ENCODE measurements at regions of chr1 and their contacts with region 1.

Region 1: DNA sequence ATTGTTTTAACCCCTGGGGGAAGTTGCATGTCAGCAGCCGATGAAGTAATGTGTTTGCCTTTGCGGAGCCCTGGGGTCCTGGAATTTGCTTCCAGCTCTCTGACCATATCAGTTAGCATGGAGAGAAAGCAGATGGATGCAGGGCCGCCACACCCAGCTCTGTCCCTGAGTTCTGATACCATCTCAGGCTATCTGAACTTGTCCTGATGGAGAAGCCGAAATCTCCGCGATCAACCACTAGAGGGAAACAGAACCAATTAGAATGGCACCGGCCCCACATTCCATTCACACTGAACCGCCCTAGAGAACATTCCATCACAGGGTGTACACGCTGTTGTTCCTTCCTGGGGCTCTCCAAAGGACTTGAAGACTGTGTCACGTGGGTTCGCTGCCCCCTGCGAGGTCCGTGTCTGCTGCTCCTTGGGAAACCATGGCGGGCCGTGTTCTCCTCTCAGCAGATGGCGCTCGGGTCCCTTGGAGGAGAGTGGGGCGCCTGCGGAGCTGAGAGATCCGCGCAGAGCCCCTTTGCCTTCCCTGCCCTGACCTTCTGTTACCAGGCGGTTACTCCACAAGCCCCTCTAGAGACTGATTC is 75.4 kb downstream of the ABCA4 start:
- DNase-seq: peak; percentile 71
- H3K4me3 ChIP-seq: no peak overlapping the region
- H3K27ac ChIP-seq: peak overlapping the region in 3 of 4 donors; percentile 15 to 61 (median 40)
- H3K4me1 ChIP-seq: peaks cover 0 to 5% (median 4%) of the 10 kb centered on the region in 4 donors
- H3K27me3 ChIP-seq: no peaks in the 10 kb centered on the region
- CTCF ChIP-seq: peak; percentile 52 to 73 (median 62)
- EP300 ChIP-seq: no peak
- POLR2A ChIP-seq: no peak

Region 2: DNA sequence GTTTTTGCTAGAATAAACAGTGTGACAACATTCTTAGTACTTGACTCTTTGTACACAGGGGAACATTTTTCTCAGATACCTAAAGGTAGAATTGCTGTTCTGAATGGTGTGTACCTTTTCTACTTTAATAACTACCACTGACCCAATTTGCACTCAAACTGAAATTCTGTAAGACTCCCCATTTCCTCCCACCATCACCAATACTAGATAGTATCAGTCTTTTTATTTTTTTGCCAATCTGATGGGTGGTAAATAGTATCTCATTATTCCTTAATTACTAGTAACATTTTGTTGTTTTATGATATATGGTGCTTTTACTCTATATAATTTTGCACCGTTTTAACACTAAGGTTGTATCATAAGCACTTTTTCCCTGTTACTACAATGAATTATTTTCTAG is 107.6 kb before region 1 on chr1:
- in situ Hi-C with region 1: no loop called
- intact Hi-C with region 1: no loop called
- DNase-seq: no peak
- H3K4me3 ChIP-seq: no peak overlapping the region
- H3K27ac ChIP-seq: no peak overlapping the region
- H3K4me1 ChIP-seq: no peaks in the 10 kb centered on the region
- H3K27me3 ChIP-seq: no peaks in the 10 kb centered on the region
- CTCF ChIP-seq: no peak
- EP300 ChIP-seq: no peak
- POLR2A ChIP-seq: no peak

Region 3: GRCh38 chr1:94247138-94248094 is 201.9 kb after region 1 on chr1:
- in situ Hi-C with region 1: loop called in 1 of 4 experiments (anchors 25 kb)
- intact Hi-C with region 1: loop called (anchors 10 kb)
- DNase-seq: peak; percentile 79
- H3K4me3 ChIP-seq: peak overlapping the region; percentile 60 to 76 (median 66)
- H3K27ac ChIP-seq: peak overlapping the region; percentile 38 to 77 (median 61)
- H3K4me1 ChIP-seq: peaks cover 3 to 11% (median 10%) of the 10 kb centered on the region in 4 donors
- H3K27me3 ChIP-seq: peaks cover 81% of the 10 kb centered on the region
- CTCF ChIP-seq: no peak
- EP300 ChIP-seq: no peak
- POLR2A ChIP-seq: no peak

Region 4: GRCh38 chr1:94335950-94336349 is 290.4 kb after region 1 on chr1:
- in situ Hi-C with region 1: loop called in 1 of 4 experiments (anchors 10 kb)
- intact Hi-C with region 1: loop called (anchors 5 kb)
- DNase-seq: peak; percentile 70
- H3K4me3 ChIP-seq: no peak overlapping the region
- H3K27ac ChIP-seq: no peak overlapping the region
- H3K4me1 ChIP-seq: no peaks in the 10 kb centered on the region
- H3K27me3 ChIP-seq: no peaks in the 10 kb centered on the region
- CTCF ChIP-seq: peak; percentile 71 to 94 (median 74)
- EP300 ChIP-seq: no peak
- POLR2A ChIP-seq: no peak

Region 5: GRCh38 chr1:94362466-94363058 is 317.0 kb after region 1 on chr1:
- in situ Hi-C with region 1: no loop called
- intact Hi-C with region 1: no loop called
- DNase-seq: no peak
- H3K4me3 ChIP-seq: no peak overlapping the region
- H3K27ac ChIP-seq: no peak overlapping the region
- H3K4me1 ChIP-seq: no peaks in the 10 kb centered on the region
- H3K27me3 ChIP-seq: no peaks in the 10 kb centered on the region
- CTCF ChIP-seq: no peak
- EP300 ChIP-seq: no peak
- POLR2A ChIP-seq: no peak

Region 6: GRCh38 chr1:94463765-94464330 is 418.3 kb after region 1 on chr1:
- in situ Hi-C with region 1: loop called in 2 of 4 experiments (anchors 25 kb)
- intact Hi-C with region 1: no loop called
- DNase-seq: no peak
- H3K4me3 ChIP-seq: no peak overlapping the region
- H3K27ac ChIP-seq: peak overlapping the region; percentile 38 to 69 (median 60)
- H3K4me1 ChIP-seq: peaks cover 7 to 31% (median 18%) of the 10 kb centered on the region in 4 donors
- H3K27me3 ChIP-seq: no peaks in the 10 kb centered on the region
- CTCF ChIP-seq: peak; percentile 50 to 71 (median 57)
- EP300 ChIP-seq: no peak
- POLR2A ChIP-seq: no peak